Natural killer cell (primary cell): ENCODE measurements at regions of chr9 and their contacts with region 1.

Region 1: DNA sequence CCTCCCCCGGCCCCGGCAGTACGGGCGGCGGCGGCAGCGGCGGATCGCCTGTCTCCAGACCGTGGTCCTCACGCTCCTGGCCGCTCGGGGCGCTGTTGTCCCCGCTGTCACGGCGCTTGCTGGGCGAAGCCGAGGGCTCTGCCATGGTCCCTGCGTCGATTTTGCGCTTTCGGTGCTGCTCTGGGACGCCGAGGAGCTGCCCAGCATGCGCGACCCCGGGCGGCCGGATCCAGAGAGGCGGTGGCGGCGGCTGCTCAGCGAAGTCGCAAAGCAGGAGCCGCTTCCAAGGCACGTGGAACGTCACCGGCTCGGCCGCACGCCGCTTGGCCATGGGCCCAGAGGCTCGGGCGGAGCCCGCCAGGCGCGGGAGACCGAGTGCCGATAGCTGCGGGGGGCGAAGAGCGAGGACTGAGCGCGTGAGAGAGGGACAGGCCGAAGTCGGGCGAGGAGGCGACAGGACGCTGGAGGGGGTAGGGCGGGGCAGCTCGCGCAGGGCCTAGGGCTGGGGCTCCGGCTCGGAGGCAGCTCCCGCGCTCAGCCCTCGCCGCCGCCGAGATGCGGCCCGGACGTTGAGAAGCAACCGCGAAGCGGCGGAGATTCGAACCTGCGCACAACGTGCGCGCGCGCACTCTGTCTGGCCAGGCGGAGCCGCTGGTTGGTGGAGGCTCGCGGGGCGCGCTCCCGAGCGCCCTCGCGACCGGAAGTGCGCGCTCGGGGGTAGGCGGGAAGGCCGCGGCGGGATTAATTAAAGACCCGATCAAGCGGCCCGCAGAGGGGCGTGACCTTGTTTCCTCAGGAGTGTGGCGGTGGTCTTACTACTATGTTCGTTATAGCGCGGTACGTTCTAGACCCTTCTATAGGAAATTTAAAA is at the start of gene C9orf40:
- DNase-seq: peak; percentile 89 to 94
- ATAC-seq: peak; percentile 90 to 97 (median 90)
- H3K4me3 ChIP-seq: peak within 1 kb of the TSS; percentile 81
- H3K4me3 Mint-ChIP-seq: peak within 1 kb of the TSS; percentile 98
- H3K27ac ChIP-seq: peak within 1 kb of the TSS; percentile 85
- H3K27ac Mint-ChIP-seq: peak within 1 kb of the TSS; percentile 92 to 97
- H3K4me1 ChIP-seq: peaks cover 13% of the 10 kb centered on the region
- H3K4me1 Mint-ChIP-seq: peaks cover 18 to 26% of the 10 kb centered on the region in 2 donors
- H3K27me3 ChIP-seq: no peaks in the 10 kb centered on the region
- H3K27me3 Mint-ChIP-seq: no peaks in the 10 kb centered on the region
- CTCF ChIP-seq: peak; percentile 76
- total RNA-seq, gene C9orf40: 1.8 to 3.9 (median 3.6) TPM

Region 2: GRCh38 chr9:75027187-75028107 is 74.9 kb after region 1 on chr9:
- intact Hi-C with region 1: loop called (anchors 2 kb)
- DNase-seq: peak in 1 of 2 donors; percentile 66
- ATAC-seq: peak; percentile 26 to 43 (median 31)
- H3K4me3 ChIP-seq: peak overlapping the region; percentile 74
- H3K4me3 Mint-ChIP-seq: peak overlapping the region; percentile 92
- H3K27ac ChIP-seq: peak overlapping the region; percentile 85
- H3K27ac Mint-ChIP-seq: peak overlapping the region; percentile 87 to 97
- H3K4me1 ChIP-seq: peaks cover 19% of the 10 kb centered on the region
- H3K4me1 Mint-ChIP-seq: peaks cover 25 to 32% of the 10 kb centered on the region in 2 donors
- H3K27me3 ChIP-seq: no peaks in the 10 kb centered on the region
- H3K27me3 Mint-ChIP-seq: peaks cover 0 to 3% of the 10 kb centered on the region in 2 donors
- CTCF ChIP-seq: peak; percentile 50

Region 3: GRCh38 chr9:75130621-75131230 is 178.2 kb after region 1 on chr9:
- intact Hi-C with region 1: no loop called
- DNase-seq: no peak
- ATAC-seq: no peak
- H3K4me3 ChIP-seq: no peak overlapping the region
- H3K4me3 Mint-ChIP-seq: no peak overlapping the region
- H3K27ac ChIP-seq: no peak overlapping the region
- H3K27ac Mint-ChIP-seq: peak overlapping the region; percentile 42 to 82
- H3K4me1 ChIP-seq: no peaks in the 10 kb centered on the region
- H3K4me1 Mint-ChIP-seq: peaks cover 55 to 65% of the 10 kb centered on the region in 2 donors
- H3K27me3 ChIP-seq: no peaks in the 10 kb centered on the region
- H3K27me3 Mint-ChIP-seq: no peaks in the 10 kb centered on the region
- CTCF ChIP-seq: no peak

Region 4: DNA sequence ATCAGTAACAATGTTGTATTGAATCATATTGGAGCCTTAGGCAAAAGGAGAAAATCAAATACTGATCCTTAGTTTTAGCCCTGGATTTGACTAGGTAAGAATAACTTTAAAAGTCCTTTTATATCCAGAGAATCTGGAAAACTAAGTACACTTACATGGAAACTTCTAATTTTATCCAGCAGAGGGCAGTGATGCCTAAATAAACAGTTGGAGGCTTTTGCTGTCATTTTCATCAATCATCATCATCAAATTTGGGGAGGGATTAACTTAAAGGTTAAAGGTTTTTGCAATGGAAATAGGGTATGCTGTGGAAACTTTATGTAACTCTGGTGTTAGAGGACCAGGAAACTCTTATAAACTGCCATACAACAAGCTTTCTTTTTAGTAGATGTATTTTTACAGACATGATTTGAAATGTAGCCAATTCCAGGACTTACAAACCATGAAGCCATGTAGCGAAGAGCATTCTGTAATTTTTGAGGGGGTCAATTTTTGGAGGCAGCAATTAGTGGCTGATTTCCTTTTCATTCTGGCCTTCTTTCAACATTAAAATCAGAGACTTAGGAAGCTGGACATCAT is 248.5 kb after region 1 on chr9:
- intact Hi-C with region 1: no loop called
- DNase-seq: peak in 1 of 2 donors; percentile 70
- ATAC-seq: peak in 2 of 3 donors; percentile 46 to 59
- H3K4me3 ChIP-seq: no peak overlapping the region
- H3K4me3 Mint-ChIP-seq: no peak overlapping the region
- H3K27ac ChIP-seq: no peak overlapping the region
- H3K27ac Mint-ChIP-seq: peak overlapping the region in 1 of 2 donors; percentile 40
- H3K4me1 ChIP-seq: no peaks in the 10 kb centered on the region
- H3K4me1 Mint-ChIP-seq: peaks cover 6 to 13% of the 10 kb centered on the region in 2 donors
- H3K27me3 ChIP-seq: no peaks in the 10 kb centered on the region
- H3K27me3 Mint-ChIP-seq: no peaks in the 10 kb centered on the region
- CTCF ChIP-seq: peak; percentile 72